SK-N-SH (cell line): ENCODE measurements at regions of chr10 and their contacts with region 1.

Region 1: DNA sequence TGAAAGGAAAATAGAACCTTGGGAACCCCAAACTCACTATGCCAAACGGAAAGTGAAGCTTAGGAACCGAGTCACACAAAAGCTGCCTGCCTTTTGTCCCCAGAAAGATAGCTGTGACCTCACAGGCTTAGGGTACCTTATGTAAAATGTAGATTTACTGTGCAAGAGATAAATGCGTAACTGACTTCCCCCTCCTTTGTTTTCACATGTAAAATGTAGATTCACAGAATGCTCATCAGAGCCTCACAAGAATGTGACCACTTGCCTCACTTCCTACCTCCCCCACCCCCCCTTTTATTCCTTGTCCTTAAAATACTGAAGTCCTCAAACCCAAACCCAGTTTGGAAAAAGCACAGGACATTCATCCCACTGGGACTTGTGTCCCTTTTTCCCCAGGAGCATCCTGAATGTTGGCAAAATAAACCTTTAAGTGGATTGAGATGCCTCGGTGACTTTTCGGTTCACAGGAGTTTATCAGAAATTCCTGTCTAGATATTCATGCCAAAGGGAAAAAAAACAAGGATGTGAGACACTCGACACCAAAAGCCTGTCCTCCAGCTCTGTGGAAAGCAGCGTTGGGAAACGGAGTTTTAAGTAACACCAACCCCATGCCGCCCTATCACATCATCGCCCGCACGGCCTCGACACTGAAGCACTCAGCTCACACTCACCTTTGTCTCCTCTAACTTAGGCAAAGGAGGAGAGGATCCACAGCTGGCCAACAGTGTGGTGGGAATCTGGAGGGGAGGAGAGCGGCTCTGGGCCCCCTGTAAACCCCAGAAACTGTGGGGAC is 45.9 kb downstream of the SVIL start:
- DNase-seq: no peak
- H3K4me3 ChIP-seq: peak overlapping the region in 1 of 2 experiments; percentile 2; a peak in 1 of 4 replicates
- H3K27ac ChIP-seq: peak overlapping the region; percentile 85 to 96
- H3K4me1 ChIP-seq: peaks cover 7 to 41% of the 10 kb centered on the region in 2 experiments
- H3K27me3 ChIP-seq: no peaks in the 10 kb centered on the region
- CTCF ChIP-seq: no peak
- EP300 ChIP-seq: peak in 1 of 2 experiments; percentile 65; a peak in 1 of 4 replicates
- RAD21 ChIP-seq: no peak

Region 2: GRCh38 chr10:29517352-29517923 is 71.4 kb before region 1 on chr10:
- CTCF ChIA-PET with region 1: interaction called, 23 read pairs
- POLR2A ChIA-PET with region 1: no interaction called
- DNase-seq: peak; percentile 71
- H3K4me3 ChIP-seq: no peak overlapping the region
- H3K27ac ChIP-seq: no peak overlapping the region
- H3K4me1 ChIP-seq: peaks cover 0 to 3% of the 10 kb centered on the region in 2 experiments; a peak in 1 of 4 replicates
- H3K27me3 ChIP-seq: no peaks in the 10 kb centered on the region
- CTCF ChIP-seq: peak; percentile 71
- EP300 ChIP-seq: no peak
- RAD21 ChIP-seq: peak; percentile 21

Region 3: GRCh38 chr10:29569795-29570194 is 19.0 kb before region 1 on chr10:
- CTCF ChIA-PET with region 1: interaction called, 11 read pairs
- POLR2A ChIA-PET with region 1: no interaction called
- DNase-seq: no peak
- H3K4me3 ChIP-seq: no peak overlapping the region
- H3K27ac ChIP-seq: peak overlapping the region; percentile 53 to 73; a peak in 3 of 4 replicates
- H3K4me1 ChIP-seq: peaks cover 7 to 16% of the 10 kb centered on the region in 2 experiments
- H3K27me3 ChIP-seq: no peaks in the 10 kb centered on the region
- CTCF ChIP-seq: no peak
- EP300 ChIP-seq: peak; percentile 53 to 58; a peak in 3 of 4 replicates
- RAD21 ChIP-seq: no peak

Region 4: GRCh38 chr10:29598851-29599311 is 10.1 kb after region 1 on chr10:
- CTCF ChIA-PET with region 1: interaction called, 15 read pairs
- POLR2A ChIA-PET with region 1: no interaction called
- DNase-seq: no peak
- H3K4me3 ChIP-seq: no peak overlapping the region
- H3K27ac ChIP-seq: peak overlapping the region in 1 of 2 experiments; percentile 44; a peak in 1 of 4 replicates
- H3K4me1 ChIP-seq: peaks cover 2 to 33% of the 10 kb centered on the region in 2 experiments; a peak in 3 of 4 replicates
- H3K27me3 ChIP-seq: no peaks in the 10 kb centered on the region
- CTCF ChIP-seq: no peak
- EP300 ChIP-seq: no peak
- RAD21 ChIP-seq: no peak

Region 5: DNA sequence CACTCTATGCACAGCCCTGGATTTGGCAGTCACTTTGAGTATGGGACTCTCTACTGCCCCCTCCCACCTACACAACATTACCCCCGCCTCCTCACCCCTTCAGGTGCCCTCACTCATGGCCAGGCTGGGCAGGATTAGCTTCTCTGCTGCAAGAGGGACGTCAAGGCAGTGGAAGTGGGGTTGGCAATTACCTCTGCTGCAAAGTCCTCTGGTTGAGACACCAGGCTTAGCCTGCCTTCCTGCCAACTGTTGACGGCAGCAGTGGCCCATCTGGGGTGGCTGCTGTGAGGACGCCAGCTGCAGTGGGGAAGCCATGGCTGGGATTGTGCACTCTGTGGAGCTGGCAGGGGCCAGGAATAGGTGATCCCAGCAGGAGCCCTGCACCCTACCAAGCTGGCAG is 19.2 kb after region 1 on chr10:
- CTCF ChIA-PET with region 1: interaction called, 29 read pairs
- POLR2A ChIA-PET with region 1: interaction called, 6 read pairs
- DNase-seq: no peak
- H3K4me3 ChIP-seq: no peak overlapping the region
- H3K27ac ChIP-seq: no peak overlapping the region
- H3K4me1 ChIP-seq: no peaks in the 10 kb centered on the region; a peak in 1 of 4 replicates
- H3K27me3 ChIP-seq: no peaks in the 10 kb centered on the region
- CTCF ChIP-seq: no peak
- EP300 ChIP-seq: no peak
- RAD21 ChIP-seq: no peak

Region 6: DNA sequence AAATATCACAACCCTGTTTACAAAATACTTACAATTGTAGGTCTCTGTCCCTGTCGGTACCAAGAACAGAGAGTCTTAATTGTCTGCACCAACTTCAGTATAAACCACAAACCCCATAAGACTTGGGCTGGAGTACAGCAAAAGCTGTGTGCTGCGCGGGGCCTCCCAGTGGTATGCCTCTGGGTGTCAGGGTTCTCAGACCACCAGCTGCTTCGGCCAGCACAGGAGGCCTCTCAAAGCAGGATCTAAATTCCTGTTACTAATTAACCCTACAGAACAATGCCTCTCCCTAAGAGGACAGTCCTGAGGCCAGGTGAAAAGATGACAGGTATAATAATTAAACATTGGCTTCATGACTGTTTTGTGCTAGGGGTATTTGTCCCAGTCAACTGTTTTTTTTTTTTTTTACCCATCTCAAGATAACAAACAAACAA is 46.9 kb after region 1 on chr10:
- CTCF ChIA-PET with region 1: no interaction called
- POLR2A ChIA-PET with region 1: no interaction called
- DNase-seq: no peak
- H3K4me3 ChIP-seq: no peak overlapping the region
- H3K27ac ChIP-seq: peak overlapping the region; percentile 56 to 93; a peak in 3 of 4 replicates
- H3K4me1 ChIP-seq: peaks cover 6 to 43% of the 10 kb centered on the region in 2 experiments; a peak in 3 of 4 replicates
- H3K27me3 ChIP-seq: no peaks in the 10 kb centered on the region
- CTCF ChIP-seq: no peak
- EP300 ChIP-seq: no peak
- RAD21 ChIP-seq: no peak